A549 (cell line): ENCODE measurements at regions of chr18 and their contacts with region 1.

Region 1: DNA sequence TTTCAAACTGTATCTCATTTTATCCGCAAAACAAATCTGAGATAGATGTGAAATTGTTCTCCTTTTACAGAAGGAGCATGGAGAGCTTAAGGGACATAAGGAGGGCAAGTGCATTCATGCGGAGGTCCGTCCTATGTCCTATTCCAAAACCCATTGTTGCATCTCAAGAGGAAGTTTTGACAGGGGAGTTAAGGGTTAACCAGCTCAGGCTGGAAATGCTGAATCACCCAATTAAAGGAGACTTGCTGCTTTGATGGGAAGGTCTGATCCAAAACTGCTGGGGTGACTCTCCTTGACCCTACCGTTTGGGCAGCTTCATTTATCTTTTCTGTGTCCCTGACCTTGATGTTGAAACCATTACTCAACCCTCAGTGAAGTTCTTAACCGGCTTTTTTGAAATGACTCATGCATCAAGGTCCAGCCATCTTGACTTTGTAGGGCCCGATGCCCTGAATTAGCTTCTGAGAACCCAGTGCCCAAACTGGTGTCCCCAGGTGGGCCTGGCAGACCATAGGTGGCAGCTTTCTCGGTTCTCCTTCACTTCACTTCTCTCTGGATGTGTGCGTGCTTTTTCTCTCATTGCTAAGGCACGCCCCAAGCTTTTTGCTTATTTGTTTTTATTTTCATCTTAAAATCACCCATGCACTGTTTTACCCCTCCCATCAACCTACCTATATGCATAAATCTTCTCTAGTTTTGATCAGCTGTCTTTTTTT is 15.9 kb upstream of the TXNDC2 start:
- DNase-seq: peak; percentile 43 to 88
- ATAC-seq: peak; percentile 80 to 86
- H3K4me3 ChIP-seq: no peak overlapping the region
- H3K27ac ChIP-seq: peak overlapping the region; percentile 85 to 94
- H3K4me1 ChIP-seq: peaks cover 38% of the 10 kb centered on the region
- CTCF ChIP-seq: no peak
- EP300 ChIP-seq: peak; percentile 58 to 79; a peak in 3 of 5 replicates
- POLR2A ChIP-seq: no peak
- RAD21 ChIP-seq: peak in 1 of 2 experiments; percentile 44; a peak in 2 of 5 replicates

Region 2: GRCh38 chr18:9449600-9450414 is 420.1 kb before region 1 on chr18:
- CTCF ChIA-PET with region 1: no interaction called
- POLR2A ChIA-PET with region 1: no interaction called
- DNase-seq: no peak
- ATAC-seq: no peak
- H3K4me3 ChIP-seq: no peak overlapping the region
- H3K27ac ChIP-seq: no peak overlapping the region
- H3K4me1 ChIP-seq: no peaks in the 10 kb centered on the region
- CTCF ChIP-seq: no peak
- EP300 ChIP-seq: no peak
- POLR2A ChIP-seq: no peak
- RAD21 ChIP-seq: no peak

Region 3: DNA sequence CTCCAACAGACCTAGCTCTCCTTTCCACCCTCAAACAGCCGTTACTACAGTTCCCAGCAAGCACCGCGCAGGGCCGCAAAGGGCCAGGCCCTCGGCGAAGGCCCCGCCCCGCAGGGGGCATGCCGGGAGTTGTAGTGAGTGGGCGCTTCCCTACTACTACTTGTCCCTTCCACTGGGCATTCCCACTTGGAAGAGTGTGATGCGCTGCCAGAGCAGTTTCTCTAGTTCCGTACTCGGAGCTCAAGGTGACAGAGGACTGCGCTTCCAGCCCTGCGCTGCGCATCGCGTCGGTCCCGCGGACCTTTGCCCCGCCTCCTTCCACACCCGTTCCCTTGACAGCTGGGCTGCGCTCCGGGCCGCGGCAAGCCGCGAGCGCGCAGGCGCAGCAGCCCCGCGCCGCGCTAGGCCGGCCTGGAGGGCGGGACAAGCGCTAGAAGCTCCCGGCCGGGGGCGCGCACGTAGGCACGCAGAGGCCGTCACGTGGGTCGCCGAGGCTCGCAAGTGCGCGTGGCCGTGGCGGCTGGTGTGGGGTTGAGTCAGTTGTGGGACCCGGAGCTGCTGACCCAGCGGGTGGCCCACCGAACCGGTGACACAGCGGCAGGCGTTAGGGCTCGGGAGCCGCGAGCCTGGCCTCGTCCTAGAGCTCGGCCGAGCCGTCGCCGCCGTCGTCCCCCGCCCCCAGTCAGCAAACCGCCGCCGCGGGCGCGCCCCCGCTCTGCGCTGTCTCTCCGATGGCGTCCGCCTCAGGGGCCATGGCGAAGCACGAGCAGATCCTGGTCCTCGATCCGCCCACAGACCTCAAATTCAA is 43.9 kb after region 1 on chr18 and contains the start of gene VAPA:
- CTCF ChIA-PET with region 1: interaction called, 3 read pairs
- POLR2A ChIA-PET with region 1: interaction called, 10 read pairs
- DNase-seq: peak; percentile 73 to 94
- ATAC-seq: peak; percentile 91 to 96
- H3K4me3 ChIP-seq: peak within 1 kb of the TSS; percentile 93
- H3K27ac ChIP-seq: peak within 1 kb of the TSS; percentile 97 to 98
- H3K4me1 ChIP-seq: peaks cover 30% of the 10 kb centered on the region
- CTCF ChIP-seq: no peak
- EP300 ChIP-seq: no peak
- POLR2A ChIP-seq: peak; percentile 59
- RAD21 ChIP-seq: no peak
- polyA plus RNA-seq, gene VAPA: 356 and 391 TPM in 2 replicates